CD4-positive, alpha-beta memory T cell (primary cell): ENCODE measurements at regions of chr18 and their contacts with region 1.

Region 1: GRCh38 chr18:59899298-59900221 is at the start of gene PMAIP1:
- DNase-seq: peak; percentile 77 to 89 (median 80)
- H3K4me3 ChIP-seq: peak within 1 kb of the TSS; percentile 80 to 96
- H3K4me3 Mint-ChIP-seq: peak within 1 kb of the TSS; percentile 97 to 99 (median 98)
- H3K27ac ChIP-seq: peak within 1 kb of the TSS; percentile 95
- H3K27ac Mint-ChIP-seq: peak within 1 kb of the TSS; percentile 89 to 99 (median 99)
- H3K4me1 ChIP-seq: peaks cover 42% of the 10 kb centered on the region
- H3K4me1 Mint-ChIP-seq: peaks cover 26 to 45% (median 33%) of the 10 kb centered on the region in 4 donors
- H3K27me3 ChIP-seq: no peaks in the 10 kb centered on the region
- H3K27me3 Mint-ChIP-seq: no peaks in the 10 kb centered on the region
- total RNA-seq, gene PMAIP1: 8.8 to 9.3 TPM

Region 2: GRCh38 chr18:59139371-59140298 is 759.9 kb before region 1 on chr18 and contains the start of gene SEC11C:
- CTCF ChIA-PET with region 1: no interaction called
- POLR2A ChIA-PET with region 1: no interaction called
- intact Hi-C with region 1: loop called (anchors 2 kb)
- DNase-seq: peak; percentile 98 to 99 (median 98)
- H3K4me3 ChIP-seq: peak within 1 kb of the TSS; percentile 59 to 88
- H3K4me3 Mint-ChIP-seq: peak within 1 kb of the TSS; percentile 92 to 97 (median 95)
- H3K27ac ChIP-seq: peak within 1 kb of the TSS; percentile 91
- H3K27ac Mint-ChIP-seq: peak within 1 kb of the TSS; percentile 99 to 100 (median 100)
- H3K4me1 ChIP-seq: peaks cover 45% of the 10 kb centered on the region
- H3K4me1 Mint-ChIP-seq: peaks cover 29 to 53% (median 39%) of the 10 kb centered on the region in 4 donors
- H3K27me3 ChIP-seq: no peaks in the 10 kb centered on the region
- H3K27me3 Mint-ChIP-seq: peaks cover 6 to 7% of the 10 kb centered on the region in 2 donors
- total RNA-seq, gene SEC11C: 85.1 to 89.3 TPM

Region 3: DNA sequence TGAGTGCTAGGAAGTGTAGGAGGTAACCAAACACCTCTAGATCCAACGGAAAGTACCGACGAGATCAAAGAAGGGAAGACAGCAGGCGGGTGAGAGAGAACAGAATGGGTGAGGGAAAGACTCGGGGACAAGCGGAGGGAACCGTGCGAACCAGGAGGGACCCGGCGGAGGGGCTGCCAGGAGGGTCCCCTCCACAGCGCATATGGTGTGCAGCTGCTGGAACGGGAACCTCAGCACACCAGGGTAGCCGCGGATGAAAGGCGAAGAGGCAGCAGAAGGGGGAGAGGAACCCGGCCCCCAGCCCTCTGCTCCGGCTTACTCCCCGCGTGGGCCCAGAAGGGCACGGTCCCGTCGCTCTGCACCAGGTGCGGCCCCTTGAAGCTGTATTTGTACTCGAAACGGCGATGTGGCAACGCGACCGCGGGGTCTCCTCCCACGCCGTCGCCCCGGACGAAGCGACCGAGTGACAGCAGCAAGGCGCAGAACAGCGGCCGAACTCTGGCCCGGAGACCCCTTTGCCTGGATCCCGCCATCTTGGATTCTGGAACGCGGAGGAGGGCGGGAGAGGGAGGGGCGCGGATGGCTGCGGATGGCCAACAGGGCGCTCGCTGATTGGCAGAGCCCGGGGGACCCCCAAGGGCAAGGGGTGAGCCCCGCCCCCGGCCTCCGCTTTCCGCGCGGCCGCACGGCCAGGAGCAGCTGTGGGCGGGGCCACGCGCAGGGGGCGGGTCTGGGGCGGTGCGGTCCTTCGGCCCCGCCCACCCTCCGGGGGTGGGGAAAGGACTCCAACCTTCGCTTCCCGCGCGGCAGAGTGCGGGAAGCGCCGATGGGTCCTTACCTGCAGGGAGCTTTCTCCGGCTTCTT is 540.6 kb before region 1 on chr18 and contains the start of gene LMAN1:
- CTCF ChIA-PET with region 1: no interaction called
- POLR2A ChIA-PET with region 1: interaction called, 4 read pairs
- intact Hi-C with region 1: loop called (anchors 1 kb)
- DNase-seq: peak; percentile 85 to 88 (median 87)
- H3K4me3 ChIP-seq: peak within 1 kb of the TSS; percentile 76 to 92
- H3K4me3 Mint-ChIP-seq: peak within 1 kb of the TSS; percentile 91 to 100 (median 98)
- H3K27ac ChIP-seq: peak within 1 kb of the TSS; percentile 95
- H3K27ac Mint-ChIP-seq: peak within 1 kb of the TSS; percentile 91 to 99 (median 97)
- H3K4me1 ChIP-seq: peaks cover 38% of the 10 kb centered on the region
- H3K4me1 Mint-ChIP-seq: peaks cover 23 to 52% (median 35%) of the 10 kb centered on the region in 4 donors
- H3K27me3 ChIP-seq: no peaks in the 10 kb centered on the region
- H3K27me3 Mint-ChIP-seq: peaks cover 0 to 2% of the 10 kb centered on the region in 2 donors
- total RNA-seq, gene LMAN1: 55.7 to 59.6 TPM

Region 4: GRCh38 chr18:59837586-59837985 is 62.0 kb before region 1 on chr18:
- CTCF ChIA-PET with region 1: interaction called, 4 read pairs
- POLR2A ChIA-PET with region 1: no interaction called
- intact Hi-C with region 1: loop called (anchors 2 kb)
- DNase-seq: peak in 4 of 5 donors; percentile 32 to 45 (median 36)
- H3K4me3 ChIP-seq: no peak overlapping the region
- H3K4me3 Mint-ChIP-seq: no peak overlapping the region
- H3K27ac ChIP-seq: no peak overlapping the region
- H3K27ac Mint-ChIP-seq: peak overlapping the region in 1 of 7 donors; percentile 47
- H3K4me1 ChIP-seq: no peaks in the 10 kb centered on the region
- H3K4me1 Mint-ChIP-seq: peaks cover 0 to 2% (median under 1%) of the 10 kb centered on the region in 4 donors
- H3K27me3 ChIP-seq: no peaks in the 10 kb centered on the region
- H3K27me3 Mint-ChIP-seq: peaks cover 4 to 6% of the 10 kb centered on the region in 2 donors

Region 5: DNA sequence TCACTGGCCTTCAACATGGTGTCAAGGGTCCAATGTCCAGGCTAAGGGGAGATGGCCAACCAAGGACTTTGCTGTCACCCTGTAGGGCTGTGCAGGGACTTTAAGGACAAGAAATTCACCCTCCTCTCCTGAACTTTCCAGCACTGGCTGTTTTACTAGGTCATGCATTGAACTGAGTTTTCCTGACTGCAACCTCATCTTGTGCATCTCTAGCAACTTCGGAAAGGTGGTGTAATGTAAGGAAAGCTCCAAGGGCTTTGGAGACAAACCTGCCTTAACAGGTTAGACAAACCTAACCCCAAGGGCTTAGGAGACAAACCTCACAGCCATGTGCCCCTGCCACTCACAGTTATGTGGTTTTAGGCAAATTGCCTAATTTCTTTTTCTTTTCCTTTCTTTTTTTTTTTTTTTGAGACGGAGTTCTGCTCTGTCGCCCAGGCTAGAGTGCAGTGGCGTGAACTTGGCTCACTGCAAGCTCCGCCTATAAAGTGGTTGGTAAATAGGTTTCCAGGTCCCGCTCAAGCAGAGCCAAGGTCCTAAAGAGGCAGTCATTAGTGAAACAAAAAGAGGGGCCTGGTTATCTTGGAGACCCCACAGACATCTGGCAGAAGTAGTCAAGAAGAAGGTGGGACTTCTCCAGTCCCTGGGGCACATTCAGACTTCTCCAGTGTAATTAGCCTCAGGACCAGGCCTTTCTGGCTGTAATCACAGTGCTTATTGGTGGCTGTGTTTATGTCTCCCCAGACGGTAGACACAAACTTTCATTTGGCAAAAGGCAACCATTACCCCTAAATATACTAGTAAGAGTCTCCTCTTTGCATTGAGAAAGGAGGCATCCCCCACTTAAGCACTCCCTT is 37.4 kb before region 1 on chr18:
- CTCF ChIA-PET with region 1: no interaction called
- POLR2A ChIA-PET with region 1: no interaction called
- intact Hi-C with region 1: no loop called
- DNase-seq: no peak
- H3K4me3 ChIP-seq: no peak overlapping the region
- H3K4me3 Mint-ChIP-seq: no peak overlapping the region
- H3K27ac ChIP-seq: no peak overlapping the region
- H3K27ac Mint-ChIP-seq: no peak overlapping the region
- H3K4me1 ChIP-seq: no peaks in the 10 kb centered on the region
- H3K4me1 Mint-ChIP-seq: no peaks in the 10 kb centered on the region
- H3K27me3 ChIP-seq: no peaks in the 10 kb centered on the region
- H3K27me3 Mint-ChIP-seq: peaks cover 0 to 1% of the 10 kb centered on the region in 2 donors

Region 6: GRCh38 chr18:59885579-59886163 is 13.9 kb before region 1 on chr18:
- CTCF ChIA-PET with region 1: interaction called, 3 read pairs
- POLR2A ChIA-PET with region 1: interaction called, 12 read pairs
- intact Hi-C with region 1: loop called (anchors 2 kb)
- DNase-seq: peak in 2 of 5 donors; percentile 11 to 60
- H3K4me3 ChIP-seq: no peak overlapping the region
- H3K4me3 Mint-ChIP-seq: peak overlapping the region in 5 of 8 donors; percentile 4 to 74 (median 55)
- H3K27ac ChIP-seq: no peak overlapping the region
- H3K27ac Mint-ChIP-seq: peak overlapping the region in 6 of 7 donors; percentile 30 to 83 (median 66)
- H3K4me1 ChIP-seq: peaks cover 23% of the 10 kb centered on the region
- H3K4me1 Mint-ChIP-seq: peaks cover 17 to 39% (median 28%) of the 10 kb centered on the region in 4 donors
- H3K27me3 ChIP-seq: no peaks in the 10 kb centered on the region
- H3K27me3 Mint-ChIP-seq: no peaks in the 10 kb centered on the region

Region 7: DNA sequence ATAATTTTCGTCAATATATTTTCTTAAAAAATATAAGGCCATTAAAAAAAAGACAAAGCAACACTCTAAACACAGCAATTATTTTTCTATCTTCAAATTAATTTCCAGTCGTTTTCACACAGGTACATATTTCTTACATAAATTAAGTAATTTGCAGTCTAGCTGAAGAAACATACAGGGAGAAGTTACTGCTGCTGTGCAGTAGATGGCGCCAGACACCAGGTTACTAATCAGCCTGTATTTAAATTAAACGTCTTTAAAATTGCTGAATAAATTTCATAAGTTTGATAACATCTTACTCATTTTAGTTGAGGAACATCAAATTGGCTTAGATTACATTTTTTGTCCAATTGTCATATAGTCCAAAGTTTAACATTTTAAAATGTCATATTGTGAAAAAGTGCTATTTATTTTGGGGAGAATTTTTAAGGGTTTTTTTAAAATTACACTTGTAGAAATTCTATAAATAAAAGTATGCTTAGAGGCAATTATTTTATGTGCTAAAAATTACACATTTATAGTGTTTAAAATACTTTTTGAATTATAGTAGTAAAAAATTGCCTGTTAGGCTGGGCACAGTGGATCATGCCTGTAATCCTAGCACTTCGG is 88.6 kb after region 1 on chr18:
- CTCF ChIA-PET with region 1: no interaction called
- POLR2A ChIA-PET with region 1: interaction called, 3 read pairs
- intact Hi-C with region 1: loop called (anchors 1 kb)
- DNase-seq: peak in 4 of 5 donors; percentile 26 to 35 (median 31)
- H3K4me3 ChIP-seq: no peak overlapping the region
- H3K4me3 Mint-ChIP-seq: no peak overlapping the region
- H3K27ac ChIP-seq: no peak overlapping the region
- H3K27ac Mint-ChIP-seq: no peak overlapping the region
- H3K4me1 ChIP-seq: no peaks in the 10 kb centered on the region
- H3K4me1 Mint-ChIP-seq: peaks cover 0 to 1% (median 0%) of the 10 kb centered on the region in 4 donors
- H3K27me3 ChIP-seq: peaks cover 8% of the 10 kb centered on the region
- H3K27me3 Mint-ChIP-seq: peaks cover 6 to 19% of the 10 kb centered on the region in 2 donors

Region 8: GRCh38 chr18:60075477-60075876 is 175.9 kb after region 1 on chr18:
- CTCF ChIA-PET with region 1: no interaction called
- POLR2A ChIA-PET with region 1: no interaction called
- intact Hi-C with region 1: no loop called
- DNase-seq: no peak
- H3K4me3 ChIP-seq: no peak overlapping the region
- H3K4me3 Mint-ChIP-seq: no peak overlapping the region
- H3K27ac ChIP-seq: no peak overlapping the region
- H3K27ac Mint-ChIP-seq: no peak overlapping the region
- H3K4me1 ChIP-seq: no peaks in the 10 kb centered on the region
- H3K4me1 Mint-ChIP-seq: no peaks in the 10 kb centered on the region
- H3K27me3 ChIP-seq: no peaks in the 10 kb centered on the region
- H3K27me3 Mint-ChIP-seq: peaks cover 0 to 3% of the 10 kb centered on the region in 2 donors